PC-9 (cell line): ENCODE measurements at regions of chr19 and their contacts with region 1.

Region 1: GRCh38 chr19:23549141-23549711 is 137.8 kb downstream of the ZNF675 start:
- DNase-seq: peak; percentile 62 to 97
- H3K4me3 ChIP-seq: peak overlapping the region; percentile 40; the same call in 1 of the 2 replicates
- H3K27ac ChIP-seq: peak overlapping the region; percentile 99
- H3K4me1 ChIP-seq: peaks cover 55% of the 10 kb centered on the region
- H3K27me3 ChIP-seq: no peaks in the 10 kb centered on the region
- CTCF ChIP-seq: no peak

Region 2: GRCh38 chr19:23345838-23346237 is 203.4 kb before region 1 on chr19:
- CTCF ChIA-PET with region 1: no interaction called
- POLR2A ChIA-PET with region 1: no interaction called
- intact Hi-C with region 1: no loop called
- DNase-seq: no peak
- H3K4me3 ChIP-seq: no peak overlapping the region
- H3K27ac ChIP-seq: no peak overlapping the region
- H3K4me1 ChIP-seq: no peaks in the 10 kb centered on the region
- H3K27me3 ChIP-seq: no peaks in the 10 kb centered on the region
- CTCF ChIP-seq: 0 out of 2 replicates have a peak, but pooled peaks have one; percentile 20

Region 3: DNA sequence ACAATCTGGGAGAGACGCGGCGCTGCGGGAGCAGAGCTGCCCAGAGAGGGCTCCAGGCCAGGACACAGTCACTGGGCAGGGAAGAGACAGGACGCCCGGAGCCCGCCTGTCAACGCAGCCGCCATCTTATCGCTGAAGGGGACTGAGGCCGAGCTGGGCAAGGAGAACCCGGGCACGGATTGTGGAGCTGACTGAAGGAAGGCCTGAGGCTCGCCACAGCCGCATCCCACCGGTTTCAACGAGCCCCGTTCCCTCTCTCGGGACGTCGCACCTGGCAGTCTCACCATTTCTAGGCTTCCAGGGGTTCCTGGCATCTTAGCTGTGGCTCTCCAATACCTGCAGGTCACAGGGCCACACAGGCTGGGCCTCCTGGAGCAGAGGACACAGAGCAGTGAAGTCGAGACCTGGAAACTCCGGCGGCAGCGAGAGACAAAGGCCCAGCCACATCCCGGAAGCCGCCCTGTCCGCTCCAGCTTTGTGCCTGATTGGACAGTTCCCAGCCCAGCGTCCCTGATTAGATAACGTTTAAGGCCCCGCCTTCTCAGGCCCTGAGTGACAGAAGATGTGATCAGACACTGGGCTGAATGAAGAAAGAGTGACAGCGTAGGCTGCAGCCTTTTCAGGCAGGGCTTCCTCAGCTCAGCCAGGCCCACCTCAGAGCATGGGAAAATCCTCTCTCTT is 154.0 kb before region 1 on chr19 and contains the start of gene ZNF91:
- CTCF ChIA-PET with region 1: no interaction called
- POLR2A ChIA-PET with region 1: no interaction called
- intact Hi-C with region 1: loop called (anchors 1 kb)
- DNase-seq: peak; percentile 92 to 94
- H3K4me3 ChIP-seq: peak within 1 kb of the TSS; percentile 88
- H3K27ac ChIP-seq: peak within 1 kb of the TSS; percentile 83
- H3K4me1 ChIP-seq: peaks cover 10% of the 10 kb centered on the region
- H3K27me3 ChIP-seq: no peaks in the 10 kb centered on the region
- CTCF ChIP-seq: no peak
- total RNA-seq, gene ZNF91: 37.4 and 44.9 TPM in 2 replicates

Region 4: GRCh38 chr19:23481043-23481442 is 68.2 kb before region 1 on chr19:
- CTCF ChIA-PET with region 1: no interaction called
- POLR2A ChIA-PET with region 1: no interaction called
- intact Hi-C with region 1: loop called (anchors 1 kb)
- DNase-seq: peak; percentile 43 to 92
- H3K4me3 ChIP-seq: no peak overlapping the region
- H3K27ac ChIP-seq: peak overlapping the region; percentile 94
- H3K4me1 ChIP-seq: peaks cover 36% of the 10 kb centered on the region
- H3K27me3 ChIP-seq: no peaks in the 10 kb centered on the region
- CTCF ChIP-seq: no peak

Region 5: GRCh38 chr19:23509686-23510450 is 39.4 kb before region 1 on chr19:
- CTCF ChIA-PET with region 1: no interaction called
- POLR2A ChIA-PET with region 1: no interaction called
- intact Hi-C with region 1: loop called (anchors 1 kb)
- DNase-seq: peak; percentile 74 to 99
- H3K4me3 ChIP-seq: no peak overlapping the region
- H3K27ac ChIP-seq: peak overlapping the region; percentile 65
- H3K4me1 ChIP-seq: peaks cover 22% of the 10 kb centered on the region
- H3K27me3 ChIP-seq: no peaks in the 10 kb centered on the region
- CTCF ChIP-seq: no peak

Region 6: DNA sequence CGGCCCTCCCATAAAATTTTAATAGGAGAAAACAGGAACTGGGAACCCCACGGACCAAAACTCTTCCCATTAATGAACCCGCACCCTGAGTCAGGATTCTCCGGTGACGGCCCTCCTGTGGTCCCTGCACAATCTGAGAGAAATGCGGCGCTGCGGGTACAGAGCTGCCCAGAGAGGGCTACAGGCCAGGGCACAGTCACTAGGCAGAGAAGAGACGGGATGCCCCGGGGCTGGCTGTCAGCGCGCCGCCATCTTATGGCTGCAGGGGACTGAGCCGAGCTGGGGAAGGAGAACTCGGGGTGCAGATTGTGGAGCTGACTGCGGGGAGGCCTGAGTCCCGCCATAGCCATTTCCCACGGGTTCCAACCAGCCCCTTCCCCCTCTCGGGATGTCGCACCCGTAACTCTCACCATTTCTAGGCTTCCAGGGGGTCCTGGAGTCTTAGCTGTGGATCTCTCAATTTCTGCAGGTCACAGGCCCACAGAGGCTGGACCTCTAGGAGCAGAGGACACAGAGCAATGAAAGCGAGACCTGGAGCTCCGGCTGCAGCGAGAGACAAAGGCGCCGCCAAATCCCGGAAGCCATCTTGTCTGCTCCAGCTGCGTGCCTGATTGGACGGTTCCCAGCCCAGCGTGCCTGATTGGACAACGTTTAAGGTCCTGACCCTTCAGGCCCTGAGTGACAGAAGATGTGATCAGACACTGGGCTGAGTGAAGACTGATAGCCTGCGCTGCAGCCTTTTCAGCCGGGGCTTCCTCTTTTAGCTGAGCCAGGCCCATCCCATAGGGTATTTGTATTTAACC is 137.6 kb after region 1 on chr19 and contains the start of gene ZNF675:
- CTCF ChIA-PET with region 1: no interaction called
- POLR2A ChIA-PET with region 1: no interaction called
- intact Hi-C with region 1: loop called (anchors 2 kb)
- DNase-seq: peak; percentile 86 to 89
- H3K4me3 ChIP-seq: peak within 1 kb of the TSS; percentile 87
- H3K27ac ChIP-seq: peak within 1 kb of the TSS; percentile 84
- H3K4me1 ChIP-seq: peaks cover 10% of the 10 kb centered on the region
- H3K27me3 ChIP-seq: no peaks in the 10 kb centered on the region
- CTCF ChIP-seq: no peak; the same call in 1 of the 2 replicates
- total RNA-seq, gene ZNF675: 11.9 and 13.0 TPM in 2 replicates

Region 7: DNA sequence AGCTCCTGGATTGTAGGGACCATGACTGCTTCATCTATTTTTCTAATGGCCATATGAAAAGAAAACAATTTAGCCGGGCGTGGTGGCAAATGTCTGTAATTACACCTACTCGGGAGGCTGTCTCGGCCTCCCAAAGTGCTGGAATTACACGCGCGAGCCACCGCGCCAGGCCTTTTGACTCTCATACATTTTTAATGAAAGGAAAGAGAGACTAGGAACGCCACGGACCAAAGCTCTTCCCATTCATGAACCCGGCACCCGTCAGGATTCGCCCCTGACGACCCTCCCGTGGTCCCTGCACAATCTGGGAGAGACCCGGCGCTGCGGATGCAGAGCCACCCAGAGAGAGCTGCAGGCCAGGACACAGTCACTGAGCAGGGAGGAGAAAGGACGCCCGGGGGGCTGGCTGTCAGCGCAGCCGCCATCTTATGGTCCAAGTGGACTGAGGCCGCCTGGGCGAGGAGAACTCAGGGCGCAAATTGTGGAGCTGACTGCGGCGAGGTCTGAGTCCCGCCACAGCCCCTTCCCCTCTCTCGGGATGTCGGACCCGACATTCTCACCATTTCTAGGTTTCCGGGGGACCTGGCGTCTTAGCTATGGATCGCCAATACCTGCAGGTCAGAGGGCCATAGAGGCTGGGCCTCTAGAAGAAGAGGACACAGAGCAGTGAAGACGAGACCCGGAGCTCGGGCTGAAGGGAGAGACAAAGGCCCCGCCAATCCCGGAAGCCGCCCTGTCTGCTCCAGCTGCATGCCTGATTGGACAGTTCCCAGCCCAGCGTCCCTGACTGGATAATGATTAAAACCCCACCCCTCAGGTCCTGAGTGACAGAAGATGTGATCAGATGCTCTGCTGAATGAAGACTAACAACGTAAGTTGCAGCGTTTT is 209.2 kb after region 1 on chr19 and contains the start of gene ZNF681:
- CTCF ChIA-PET with region 1: no interaction called
- POLR2A ChIA-PET with region 1: no interaction called
- intact Hi-C with region 1: loop called (anchors 1 kb)
- DNase-seq: peak; percentile 86
- H3K4me3 ChIP-seq: peak within 1 kb of the TSS; percentile 70
- H3K27ac ChIP-seq: peak within 1 kb of the TSS; percentile 43
- H3K4me1 ChIP-seq: peaks cover 9% of the 10 kb centered on the region; the same call in 1 of the 2 replicates
- H3K27me3 ChIP-seq: no peaks in the 10 kb centered on the region
- CTCF ChIP-seq: no peak; the same call in 1 of the 2 replicates
- total RNA-seq, gene ZNF681: 1.9 and 2.4 TPM in 2 replicates

Region 8: DNA sequence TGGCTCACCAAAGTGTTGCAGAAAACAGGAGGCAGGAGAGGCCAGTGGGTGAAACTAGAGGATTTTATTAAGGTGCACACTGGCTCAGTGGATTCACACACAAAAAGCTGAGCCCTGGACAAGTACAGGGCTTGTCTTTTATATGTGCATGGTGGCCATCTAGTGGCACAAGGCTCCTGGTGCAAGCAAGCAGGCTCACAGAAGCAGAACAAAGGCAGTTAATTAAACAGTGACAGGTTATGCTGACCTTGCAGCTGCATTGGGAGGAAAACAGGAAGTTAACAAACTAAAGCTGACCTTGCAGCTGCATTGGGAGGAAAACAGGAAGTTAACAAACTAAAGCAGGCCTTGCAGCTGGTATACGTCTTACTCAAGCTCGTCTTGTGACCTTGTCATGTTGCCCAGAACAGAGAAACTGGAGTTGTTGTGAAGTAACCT is 274.7 kb after region 1 on chr19:
- CTCF ChIA-PET with region 1: no interaction called
- POLR2A ChIA-PET with region 1: no interaction called
- intact Hi-C with region 1: loop called (anchors 2 kb)
- DNase-seq: no peak
- H3K4me3 ChIP-seq: no peak overlapping the region
- H3K27ac ChIP-seq: no peak overlapping the region
- H3K4me1 ChIP-seq: peaks cover 21% of the 10 kb centered on the region
- H3K27me3 ChIP-seq: no peaks in the 10 kb centered on the region
- CTCF ChIP-seq: peak; percentile 34; the same call in 1 of the 2 replicates